ENCODE measurements at regions of chr11 and their contacts with region 1.

Region 1: DNA sequence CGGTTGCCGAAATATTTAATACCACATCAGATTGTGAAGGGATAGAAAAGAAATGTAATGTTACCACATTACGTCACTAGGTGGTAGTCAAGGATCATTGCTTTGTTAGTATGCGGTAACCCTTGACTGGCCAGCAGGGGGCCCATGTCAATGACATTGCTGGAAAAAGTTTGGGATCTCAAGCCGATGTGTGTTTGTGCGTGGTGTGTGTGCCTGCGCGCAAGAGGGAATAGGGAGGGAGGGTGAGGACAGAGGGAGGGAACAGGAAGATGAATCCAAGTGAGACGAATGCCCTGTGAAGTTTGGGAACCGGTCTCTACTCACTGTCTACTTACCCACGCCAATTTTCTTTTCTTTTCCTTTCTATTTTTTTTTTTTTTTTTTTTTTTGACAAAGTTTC is 10.7 kb upstream of the MRGPRX2 start:
- DNase-seq: peak; percentile 43 to 82 (median 67)

Region 2: GRCh38 chr11:19110280-19110679 is 39.0 kb after region 1 on chr11:
- intact Hi-C with region 1: no loop called
- DNase-seq: peak in 22 of 42 donors; percentile 3 to 52 (median 20)

Region 3: DNA sequence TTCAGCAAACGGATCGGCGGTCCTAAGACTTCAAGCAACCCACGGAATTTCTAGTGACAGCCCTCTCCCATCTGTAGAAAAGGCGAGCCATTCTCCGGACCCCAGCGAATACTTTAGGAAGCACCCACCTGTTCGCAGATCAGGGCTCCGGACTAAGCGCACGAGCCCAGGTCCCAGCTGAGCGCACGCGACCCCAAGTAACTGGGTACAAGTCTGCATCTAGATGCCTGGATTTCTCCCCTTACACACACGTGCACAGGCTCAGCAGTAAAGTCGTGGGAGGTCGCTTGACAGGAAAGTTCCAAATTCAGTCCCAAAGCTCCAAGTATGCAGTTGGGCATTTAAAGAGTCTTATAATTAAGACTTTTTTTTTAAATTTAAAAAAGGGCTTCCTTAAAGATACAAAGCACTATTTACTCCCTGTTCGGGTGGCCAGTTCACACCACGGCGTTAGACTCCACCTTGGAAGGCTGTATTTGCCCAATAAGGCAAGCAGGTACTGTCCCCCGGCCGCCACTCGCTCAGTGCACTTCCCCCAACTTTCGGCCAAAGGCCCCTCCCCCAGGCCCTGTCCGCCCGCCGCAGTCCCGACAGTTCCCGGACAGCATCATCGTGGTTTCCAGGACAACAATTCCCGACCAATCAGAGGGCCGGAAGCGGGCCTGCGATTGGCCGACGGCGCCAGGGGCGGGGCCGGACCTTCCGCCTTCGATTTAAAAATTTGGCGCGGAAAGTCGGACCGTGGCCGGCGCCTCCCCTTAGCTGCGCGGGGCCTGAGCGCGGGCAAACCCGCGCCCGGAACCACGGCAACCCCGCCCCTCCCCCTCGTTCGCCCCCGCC is 169.4 kb after region 1 on chr11 and contains the start of gene E2F8:
- intact Hi-C with region 1: loop called (anchors 10 kb)
- DNase-seq: peak; percentile 84 to 97 (median 92)